CD8-positive, alpha-beta T cell (primary cell): ENCODE measurements at regions of chr2 and their contacts with region 1.

Region 1: DNA sequence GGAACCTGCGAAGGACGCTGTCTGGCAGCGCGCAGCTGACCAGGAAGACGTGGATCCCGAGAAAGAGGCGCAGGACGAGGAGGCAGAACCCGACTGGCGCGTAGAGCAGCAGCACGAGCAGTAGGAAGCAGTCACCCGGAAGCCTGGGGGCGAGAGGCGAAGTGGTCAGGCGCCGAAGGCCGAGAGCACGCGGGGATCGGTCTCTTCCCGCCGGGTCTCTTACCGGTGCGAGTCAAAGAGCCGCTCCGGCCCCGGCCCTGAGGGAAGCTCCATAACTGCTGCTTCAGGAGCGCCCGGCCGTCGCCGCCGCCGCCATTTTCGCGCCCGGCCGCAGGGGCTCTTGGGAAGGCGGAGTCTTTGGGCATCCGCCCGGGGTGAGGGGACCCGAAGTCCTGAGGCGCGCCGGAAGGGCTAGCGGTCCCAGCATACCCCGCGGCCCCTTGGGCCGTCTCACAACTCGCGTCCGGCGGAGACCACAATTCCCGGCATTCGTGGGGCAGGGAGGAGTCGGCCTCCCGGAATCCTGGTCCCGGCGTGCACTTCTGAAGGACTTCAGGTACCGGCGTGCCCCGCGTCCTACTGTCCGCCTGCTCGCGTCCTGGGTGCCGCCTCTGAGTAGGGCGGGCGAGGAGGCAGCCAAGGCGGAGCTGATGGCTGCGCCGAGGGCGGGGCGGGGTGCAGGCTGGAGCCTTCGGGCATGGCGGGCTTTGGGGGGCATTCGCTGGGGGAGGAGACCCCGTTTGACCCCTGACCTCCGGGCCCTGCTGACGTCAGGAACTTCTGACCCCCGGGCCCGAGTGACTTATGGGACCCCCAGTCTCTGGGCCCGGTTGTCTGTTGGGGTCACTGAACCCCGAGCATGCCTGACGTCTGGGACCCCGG is at the starts of genes AUP1 and HTRA2:
- DNase-seq: peak; percentile 70 to 93 (median 84)
- ATAC-seq: peak; percentile 89
- H3K4me3 ChIP-seq: peak within 1 kb of the TSS; percentile 95 to 99
- H3K4me3 Mint-ChIP-seq: peak within 1 kb of the TSS; percentile 93
- H3K27ac ChIP-seq: peak within 1 kb of the TSS; percentile 63 to 95
- H3K27ac Mint-ChIP-seq: peak within 1 kb of the TSS; percentile 95
- H3K4me1 ChIP-seq: peaks cover 25% of the 10 kb centered on the region
- H3K4me1 Mint-ChIP-seq: peaks cover 38% of the 10 kb centered on the region
- H3K27me3 ChIP-seq: no peaks in the 10 kb centered on the region
- H3K27me3 Mint-ChIP-seq: no peaks in the 10 kb centered on the region
- CTCF ChIP-seq: no peak
- total RNA-seq, gene AUP1: 201 to 202 TPM
- total RNA-seq, gene HTRA2: 15.7 TPM

Region 2: DNA sequence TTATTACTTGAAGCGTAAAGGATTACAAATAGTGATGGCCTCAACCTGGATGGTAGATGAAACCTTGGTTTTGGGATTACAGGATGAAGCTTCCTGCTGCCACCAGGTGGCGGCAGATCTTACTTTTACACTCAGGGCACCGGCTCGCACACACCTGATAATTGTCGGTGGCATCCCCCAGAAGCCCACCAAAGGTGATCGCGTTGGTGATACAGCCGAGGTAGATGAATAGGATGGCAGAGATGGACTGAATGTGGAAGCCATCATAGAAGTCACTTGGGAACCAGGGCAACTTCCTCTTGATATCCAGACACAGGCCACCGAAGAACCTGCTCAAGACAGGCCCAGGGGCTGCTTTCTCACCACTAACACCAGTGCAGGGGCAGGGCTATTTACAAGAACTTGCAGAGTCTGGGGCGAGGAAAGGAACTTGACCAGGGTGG is 279.4 kb before region 1 on chr2:
- CTCF ChIA-PET with region 1: interaction called, 13 read pairs
- POLR2A ChIA-PET with region 1: no interaction called
- intact Hi-C with region 1: loop called in 1 of 2 experiments (anchors 1 kb)
- DNase-seq: peak; percentile 7 to 79 (median 54)
- ATAC-seq: peak; percentile 75
- H3K4me3 ChIP-seq: no peak overlapping the region
- H3K4me3 Mint-ChIP-seq: no peak overlapping the region
- H3K27ac ChIP-seq: no peak overlapping the region
- H3K27ac Mint-ChIP-seq: no peak overlapping the region
- H3K4me1 ChIP-seq: peaks cover 3% of the 10 kb centered on the region
- H3K4me1 Mint-ChIP-seq: peaks cover 2% of the 10 kb centered on the region
- H3K27me3 ChIP-seq: no peaks in the 10 kb centered on the region
- H3K27me3 Mint-ChIP-seq: no peaks in the 10 kb centered on the region
- CTCF ChIP-seq: peak; percentile 83

Region 3: DNA sequence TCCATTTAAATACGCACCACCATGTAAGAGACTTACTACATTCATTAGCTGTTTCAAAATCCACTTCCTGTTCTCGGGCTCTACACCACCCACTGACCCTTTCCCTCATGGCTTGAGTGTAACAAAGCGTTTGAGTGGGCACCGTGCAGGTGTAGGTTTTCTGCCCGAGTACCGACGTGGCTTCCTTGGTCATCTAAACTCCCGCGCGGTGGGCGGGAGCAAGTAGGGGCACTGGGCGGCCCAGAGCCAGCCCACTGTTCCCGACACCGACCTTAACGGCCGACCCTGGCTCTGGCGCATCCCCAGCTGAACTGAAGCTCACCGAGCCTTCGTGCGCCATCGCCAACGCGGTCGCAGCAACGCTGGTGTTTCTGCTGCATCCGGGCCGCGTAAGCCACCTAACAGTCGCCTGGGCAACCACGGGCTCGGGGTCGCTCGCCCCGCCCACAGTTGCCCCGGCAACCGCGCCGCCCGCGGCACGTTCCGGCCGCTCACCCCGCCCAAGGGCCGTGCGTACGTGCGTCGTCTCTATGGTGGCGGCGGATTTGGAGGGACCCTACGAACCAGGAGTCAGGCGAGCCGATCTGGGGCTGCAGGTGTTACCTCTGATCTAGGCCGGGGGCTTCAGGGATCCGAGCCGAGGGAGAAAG is 108.3 kb before region 1 on chr2 and contains the starts of genes C2orf81 and WDR54:
- CTCF ChIA-PET with region 1: no interaction called
- POLR2A ChIA-PET with region 1: no interaction called
- intact Hi-C with region 1: loop called in 1 of 2 experiments (anchors 1 kb)
- DNase-seq: peak; percentile 90 to 98 (median 95)
- ATAC-seq: peak; percentile 88
- H3K4me3 ChIP-seq: peak within 1 kb of the TSS; percentile 72 to 92
- H3K4me3 Mint-ChIP-seq: peak within 1 kb of the TSS; percentile 98
- H3K27ac ChIP-seq: peak within 1 kb of the TSS; percentile 96 to 97
- H3K27ac Mint-ChIP-seq: peak within 1 kb of the TSS; percentile 96
- H3K4me1 ChIP-seq: peaks cover 20% of the 10 kb centered on the region
- H3K4me1 Mint-ChIP-seq: peaks cover 17% of the 10 kb centered on the region
- H3K27me3 ChIP-seq: no peaks in the 10 kb centered on the region
- H3K27me3 Mint-ChIP-seq: no peaks in the 10 kb centered on the region
- CTCF ChIP-seq: no peak
- total RNA-seq, gene C2orf81: 0.75 to 1.8 TPM
- total RNA-seq, gene WDR54: 18.4 to 19.8 TPM

Region 4: DNA sequence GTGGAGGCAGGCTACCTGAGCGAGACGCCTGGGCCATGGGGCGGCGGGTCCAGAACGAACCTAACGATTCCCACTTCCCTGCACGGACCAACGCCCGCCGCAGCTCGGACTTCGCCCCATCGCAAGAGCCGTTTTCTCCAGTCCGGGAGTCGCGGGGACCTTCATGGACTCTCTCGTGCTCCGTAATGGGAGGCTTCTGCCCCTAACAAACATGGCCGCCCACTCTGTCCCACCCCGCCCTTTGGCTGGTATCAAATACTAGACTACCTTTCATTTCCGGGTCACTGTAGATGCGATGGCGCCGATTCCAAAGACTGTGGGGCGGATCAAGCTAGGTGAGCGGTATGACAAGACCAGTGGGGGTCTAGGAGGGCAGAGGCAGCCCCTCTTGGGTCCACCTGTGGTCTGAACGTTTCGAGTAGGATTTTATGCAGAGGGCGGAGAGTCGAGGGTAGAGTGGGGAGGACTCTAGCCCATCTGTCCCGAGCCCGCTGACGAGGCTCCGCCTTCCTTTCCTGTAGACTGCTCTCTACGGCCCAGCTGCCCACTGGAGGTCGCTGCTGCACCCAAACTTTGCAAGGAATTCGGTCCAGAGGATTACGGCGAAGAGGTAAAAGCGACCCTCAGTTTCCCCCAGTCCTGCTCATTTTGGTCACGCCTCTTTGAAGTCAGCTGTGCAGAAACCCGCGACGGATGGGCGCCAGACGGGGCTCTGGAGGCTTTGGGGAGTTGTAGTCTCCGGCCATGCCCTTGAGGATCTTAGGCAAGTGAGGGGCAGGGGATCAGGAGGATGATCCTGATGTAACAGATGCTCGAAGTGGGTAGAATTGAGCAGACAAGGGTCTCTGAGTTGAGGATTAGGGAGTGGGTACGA is 46.6 kb before region 1 on chr2 and contains the starts of genes CCDC142 and TTC31:
- CTCF ChIA-PET with region 1: interaction called, 43 read pairs
- POLR2A ChIA-PET with region 1: interaction called, 28 read pairs
- intact Hi-C with region 1: loop called (anchors 1 kb)
- DNase-seq: peak; percentile 85 to 97 (median 94)
- ATAC-seq: peak; percentile 93
- H3K4me3 ChIP-seq: peak within 1 kb of the TSS; percentile 81 to 97
- H3K4me3 Mint-ChIP-seq: peak within 1 kb of the TSS; percentile 97
- H3K27ac ChIP-seq: peak within 1 kb of the TSS; percentile 88 to 90
- H3K27ac Mint-ChIP-seq: peak within 1 kb of the TSS; percentile 99
- H3K4me1 ChIP-seq: peaks cover 25% of the 10 kb centered on the region
- H3K4me1 Mint-ChIP-seq: peaks cover 42% of the 10 kb centered on the region
- H3K27me3 ChIP-seq: no peaks in the 10 kb centered on the region
- H3K27me3 Mint-ChIP-seq: no peaks in the 10 kb centered on the region
- CTCF ChIP-seq: peak; percentile 74
- total RNA-seq, gene CCDC142: 12.6 to 13.6 TPM
- total RNA-seq, gene TTC31: 25.9 to 30.8 TPM

Region 5: GRCh38 chr2:74553892-74554645 is 24.5 kb after region 1 on chr2 and contains the start of gene LOXL3:
- CTCF ChIA-PET with region 1: interaction called, 5 read pairs
- POLR2A ChIA-PET with region 1: no interaction called
- intact Hi-C with region 1: loop called (anchors 1 kb)
- DNase-seq: peak in 6 of 9 experiments; percentile 58 to 87 (median 70)
- ATAC-seq: peak; percentile 63
- H3K4me3 ChIP-seq: peak within 1 kb of the TSS; percentile 97 to 100
- H3K4me3 Mint-ChIP-seq: peak within 1 kb of the TSS; percentile 91
- H3K27ac ChIP-seq: peak within 1 kb of the TSS; percentile 66 to 77
- H3K27ac Mint-ChIP-seq: peak within 1 kb of the TSS; percentile 84
- H3K4me1 ChIP-seq: peaks cover 17% of the 10 kb centered on the region
- H3K4me1 Mint-ChIP-seq: peaks cover 10% of the 10 kb centered on the region
- H3K27me3 ChIP-seq: peaks cover 2 to 11% of the 10 kb centered on the region in 2 experiments
- H3K27me3 Mint-ChIP-seq: peaks cover 19% of the 10 kb centered on the region
- CTCF ChIP-seq: no peak
- total RNA-seq, gene LOXL3: not detected